ENCODE measurements at regions of chrX and their contacts with region 1.

Region 1: GRCh38 chrX:72540318-72540717 is 32.3 kb downstream of the HDAC8 start:
- DNase-seq: no peak
- H3K4me3 ChIP-seq: no peak overlapping the region
- H3K27ac ChIP-seq: no peak overlapping the region
- H3K4me1 ChIP-seq: peaks cover 0 to 4% (median 0%) of the 10 kb centered on the region in 4 donors
- H3K27me3 ChIP-seq: no peaks in the 10 kb centered on the region
- CTCF ChIP-seq: no peak
- EP300 ChIP-seq: no peak
- POLR2A ChIP-seq: no peak

Region 2: GRCh38 chrX:72306851-72307645 is 233.3 kb before region 1 on chrX:
- in situ Hi-C with region 1: loop called in 2 of 4 experiments (anchors 25 kb)
- intact Hi-C with region 1: no loop called
- DNase-seq: peak; percentile 65
- H3K4me3 ChIP-seq: peak overlapping the region; percentile 37 to 61 (median 48)
- H3K27ac ChIP-seq: no peak overlapping the region
- H3K4me1 ChIP-seq: peaks cover 0 to 36% (median 28%) of the 10 kb centered on the region in 4 donors
- H3K27me3 ChIP-seq: peaks cover 49% of the 10 kb centered on the region
- CTCF ChIP-seq: no peak
- EP300 ChIP-seq: no peak
- POLR2A ChIP-seq: no peak

Measured in transverse colon (tissue), 4 donors.